ENCODE measurements at regions of chr19 and their contacts with region 1.

Region 1: DNA sequence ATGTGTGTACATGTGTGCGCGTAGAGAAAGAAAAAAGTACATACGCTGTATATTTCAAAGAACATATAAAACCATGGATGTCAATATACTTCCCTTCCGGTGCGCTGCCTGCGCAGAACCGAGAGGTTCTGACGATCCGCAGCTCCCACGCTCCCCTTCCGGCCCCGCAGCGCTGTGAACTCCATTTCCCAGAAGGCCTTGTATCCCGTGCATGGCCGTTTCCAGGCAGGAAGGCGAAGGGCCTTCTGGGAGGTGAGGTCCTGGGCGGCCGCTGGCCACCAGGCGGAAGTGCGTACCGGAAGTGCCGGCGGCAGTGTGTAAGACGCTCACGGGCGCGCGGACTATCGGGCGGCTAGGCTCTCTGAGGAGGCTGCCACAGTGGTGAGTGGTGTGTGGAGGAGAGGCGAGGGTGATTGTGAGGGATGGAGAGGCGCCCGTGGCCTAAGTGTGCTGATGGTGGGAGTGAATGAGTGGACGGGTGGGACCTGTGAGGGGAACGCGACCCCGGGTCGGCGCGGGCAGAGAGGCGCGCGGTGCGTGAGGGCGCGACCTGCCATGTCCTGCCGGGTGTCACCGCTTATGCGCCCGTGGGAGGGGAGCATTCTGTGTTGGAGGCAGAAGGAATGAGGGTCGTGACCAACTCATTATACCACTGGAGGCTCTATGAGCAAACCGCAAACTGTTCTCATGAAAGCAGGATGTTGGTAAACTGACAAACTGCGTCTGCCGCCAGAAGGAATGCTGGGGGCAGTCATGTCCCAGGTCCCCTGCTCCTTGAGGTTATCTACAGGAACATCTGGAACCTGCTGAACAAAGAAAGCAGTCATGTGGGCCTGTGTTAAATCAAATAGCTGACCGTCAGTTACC is at the start of gene ERVK3-1:
- DNase-seq: peak; percentile 80 to 95 (median 93)
- ATAC-seq: peak; percentile 99
- H3K4me3 ChIP-seq: peak within 1 kb of the TSS; percentile 69
- H3K4me3 Mint-ChIP-seq: peak within 1 kb of the TSS; percentile 94 to 100 (median 98)
- H3K27ac ChIP-seq: peak within 1 kb of the TSS; percentile 91
- H3K27ac Mint-ChIP-seq: peak within 1 kb of the TSS; percentile 98 to 100 (median 99)
- H3K4me1 ChIP-seq: peaks cover 14 to 20% of the 10 kb centered on the region in 2 donors
- H3K4me1 Mint-ChIP-seq: peaks cover 33 to 64% (median 55%) of the 10 kb centered on the region in 7 donors
- H3K27me3 ChIP-seq: no peaks in the 10 kb centered on the region
- H3K27me3 Mint-ChIP-seq: no peaks in the 10 kb centered on the region
- total RNA-seq, gene ERVK3-1: 59.7 to 122 (median 65.4) TPM

Region 2: GRCh38 chr19:57240311-57241090 is 1064.8 kb before region 1 on chr19 and contains the start of gene ZNF805:
- CTCF ChIA-PET with region 1: no interaction called
- POLR2A ChIA-PET with region 1: no interaction called
- intact Hi-C with region 1: loop called in 1 of 2 experiments (anchors 1 kb)
- DNase-seq: peak; percentile 82 to 96 (median 93)
- ATAC-seq: peak; percentile 97
- H3K4me3 ChIP-seq: peak within 1 kb of the TSS; percentile 73
- H3K4me3 Mint-ChIP-seq: peak within 1 kb of the TSS; percentile 88 to 97 (median 94)
- H3K27ac ChIP-seq: peak within 1 kb of the TSS; percentile 95
- H3K27ac Mint-ChIP-seq: peak within 1 kb of the TSS; percentile 96 to 99 (median 97)
- H3K4me1 ChIP-seq: peaks cover 19% of the 10 kb centered on the region in 2 donors
- H3K4me1 Mint-ChIP-seq: peaks cover 20 to 44% (median 36%) of the 10 kb centered on the region in 7 donors
- H3K27me3 ChIP-seq: no peaks in the 10 kb centered on the region
- H3K27me3 Mint-ChIP-seq: peaks cover 0 to 3% (median 0%) of the 10 kb centered on the region in 5 donors
- total RNA-seq, gene ZNF805: 12.0 to 26.2 (median 23.7) TPM

Region 3: DNA sequence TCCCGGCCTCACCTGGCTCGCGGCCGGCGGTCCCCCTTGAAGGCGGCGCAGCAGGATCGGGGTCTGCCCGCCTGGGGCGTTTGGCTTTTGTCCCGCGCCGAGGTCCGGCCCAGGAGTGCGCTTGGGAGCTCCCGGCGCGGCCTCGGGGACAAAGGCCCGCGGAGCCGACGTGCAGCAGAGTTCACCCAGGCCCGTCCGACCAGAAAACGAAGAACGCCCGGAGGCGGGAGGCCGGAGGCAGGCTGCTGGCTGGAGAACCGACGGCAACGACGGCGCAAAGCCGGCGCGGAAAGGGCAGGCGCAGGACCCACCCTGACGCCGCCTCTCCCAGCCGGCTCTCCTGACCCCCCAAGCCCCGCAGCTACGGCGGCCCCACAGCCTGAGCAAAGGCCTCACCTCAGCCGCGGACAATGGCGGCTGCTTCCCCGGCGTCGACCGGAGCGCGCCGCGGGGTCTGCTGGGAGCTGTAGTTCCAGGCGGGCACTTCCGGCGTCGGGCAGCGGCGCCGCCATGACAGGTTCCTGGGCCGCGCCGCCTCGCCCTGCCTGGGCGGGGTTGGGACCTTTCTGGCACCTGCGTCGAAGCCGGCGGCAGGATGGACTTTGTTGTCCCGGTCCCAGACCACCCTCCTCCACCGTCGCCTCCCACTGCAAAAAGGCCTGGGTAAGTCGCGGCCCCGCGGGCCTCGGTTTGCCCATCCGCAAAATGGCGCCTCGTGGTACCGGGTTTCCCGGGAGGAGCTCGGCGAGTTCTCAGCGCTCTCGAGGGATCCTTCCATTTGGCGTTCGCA is 302.7 kb before region 1 on chr19 and contains the start of gene ZNF606:
- CTCF ChIA-PET with region 1: no interaction called
- POLR2A ChIA-PET with region 1: no interaction called
- intact Hi-C with region 1: loop called in 1 of 2 experiments (anchors 1 kb)
- DNase-seq: peak; percentile 79 to 87 (median 85)
- ATAC-seq: peak; percentile 100
- H3K4me3 ChIP-seq: peak within 1 kb of the TSS; percentile 91
- H3K4me3 Mint-ChIP-seq: peak within 1 kb of the TSS; percentile 80 to 90 (median 88)
- H3K27ac ChIP-seq: peak within 1 kb of the TSS; percentile 90
- H3K27ac Mint-ChIP-seq: peak within 1 kb of the TSS; percentile 79 to 94 (median 88)
- H3K4me1 ChIP-seq: peaks cover 14 to 18% of the 10 kb centered on the region in 2 donors
- H3K4me1 Mint-ChIP-seq: peaks cover 15 to 40% (median 27%) of the 10 kb centered on the region in 7 donors
- H3K27me3 ChIP-seq: no peaks in the 10 kb centered on the region
- H3K27me3 Mint-ChIP-seq: no peaks in the 10 kb centered on the region
- total RNA-seq, gene ZNF606: 11.9 to 37.5 (median 15.3) TPM

Region 4: GRCh38 chr19:58346961-58347931 is 41.9 kb after region 1 on chr19:
- CTCF ChIA-PET with region 1: no interaction called
- POLR2A ChIA-PET with region 1: interaction called, 3 read pairs
- intact Hi-C with region 1: loop called in 1 of 2 experiments (anchors 5 kb)
- DNase-seq: peak; percentile 50 to 78 (median 68)
- ATAC-seq: peak; percentile 98
- H3K4me3 ChIP-seq: peak overlapping the region; percentile 77
- H3K4me3 Mint-ChIP-seq: peak overlapping the region; percentile 86 to 97 (median 92)
- H3K27ac ChIP-seq: peak overlapping the region; percentile 73
- H3K27ac Mint-ChIP-seq: peak overlapping the region; percentile 71 to 93 (median 85)
- H3K4me1 ChIP-seq: peaks cover 0 to 7% of the 10 kb centered on the region in 2 donors
- H3K4me1 Mint-ChIP-seq: peaks cover 23 to 36% (median 29%) of the 10 kb centered on the region in 7 donors
- H3K27me3 ChIP-seq: no peaks in the 10 kb centered on the region
- H3K27me3 Mint-ChIP-seq: peaks cover 0 to 5% (median 0%) of the 10 kb centered on the region in 5 donors

Region 5: DNA sequence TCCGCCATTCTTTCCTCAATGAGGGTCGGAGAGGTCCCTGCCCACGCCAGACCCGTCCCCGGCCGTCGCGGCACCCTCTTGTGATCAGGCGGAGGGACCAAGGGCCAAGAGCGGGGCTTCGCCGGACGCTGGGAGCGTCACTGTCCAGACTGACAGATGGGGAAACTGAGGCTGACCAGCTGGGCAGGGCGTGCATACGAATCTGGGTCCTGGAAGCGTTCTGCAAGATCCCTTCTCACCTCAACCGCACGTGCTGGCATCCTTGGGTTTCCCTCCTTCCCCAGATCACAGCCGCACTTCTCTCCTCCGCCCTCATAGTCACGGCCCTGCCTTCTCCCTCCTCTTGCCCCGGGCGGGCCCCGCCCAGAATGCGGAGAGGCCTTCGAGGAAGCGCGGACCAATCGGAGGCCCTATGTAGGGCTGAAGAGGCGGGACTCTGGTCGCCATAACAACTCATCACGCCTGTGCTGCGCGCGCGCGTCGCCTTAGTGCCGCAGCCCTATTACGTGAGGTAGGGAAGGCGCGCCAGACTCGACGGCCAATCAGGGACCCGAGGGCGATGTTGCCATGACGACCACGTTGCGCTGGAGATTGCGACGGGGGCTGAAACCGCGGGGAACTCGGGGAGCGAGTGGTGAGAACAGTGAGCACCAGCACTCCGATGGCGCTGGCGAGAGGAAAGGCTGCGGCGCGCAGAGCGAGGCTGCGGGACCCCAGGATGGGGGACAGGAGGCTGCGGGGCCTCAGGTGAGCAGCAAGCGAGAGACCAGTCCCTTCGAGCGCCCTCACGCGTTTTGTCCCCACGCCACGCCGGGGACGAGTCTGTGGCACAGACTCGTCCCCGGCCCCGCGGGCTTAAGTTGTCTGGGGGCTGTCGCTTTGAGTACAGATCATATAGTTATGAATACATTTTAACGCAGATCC is 95.9 kb after region 1 on chr19:
- CTCF ChIA-PET with region 1: no interaction called
- POLR2A ChIA-PET with region 1: no interaction called
- intact Hi-C with region 1: loop called in 1 of 2 experiments (anchors 1 kb)
- DNase-seq: peak; percentile 96 to 100 (median 98)
- ATAC-seq: peak; percentile 97
- H3K4me3 ChIP-seq: peak overlapping the region; percentile 77
- H3K4me3 Mint-ChIP-seq: peak overlapping the region; percentile 86 to 98 (median 94)
- H3K27ac ChIP-seq: peak overlapping the region; percentile 91
- H3K27ac Mint-ChIP-seq: peak overlapping the region; percentile 88 to 97 (median 94)
- H3K4me1 ChIP-seq: peaks cover 6 to 13% of the 10 kb centered on the region in 2 donors
- H3K4me1 Mint-ChIP-seq: peaks cover 6 to 19% (median 8%) of the 10 kb centered on the region in 7 donors
- H3K27me3 ChIP-seq: peaks cover 0 to 3% of the 10 kb centered on the region in 2 donors
- H3K27me3 Mint-ChIP-seq: peaks cover 5 to 20% (median 7%) of the 10 kb centered on the region in 5 donors

Region 6: GRCh38 chr19:58466760-58467589 is 161.7 kb after region 1 on chr19 and contains the start of gene ZNF324:
- CTCF ChIA-PET with region 1: no interaction called
- POLR2A ChIA-PET with region 1: no interaction called
- intact Hi-C with region 1: loop called (anchors 1 to 2 kb)
- DNase-seq: peak; percentile 92 to 97 (median 95)
- ATAC-seq: peak; percentile 98
- H3K4me3 ChIP-seq: peak within 1 kb of the TSS; percentile 92
- H3K4me3 Mint-ChIP-seq: peak within 1 kb of the TSS; percentile 80 to 89 (median 86)
- H3K27ac ChIP-seq: peak within 1 kb of the TSS; percentile 99
- H3K27ac Mint-ChIP-seq: peak within 1 kb of the TSS in 8 of 9 donors; percentile 67 to 91 (median 85)
- H3K4me1 ChIP-seq: peaks cover 7 to 11% of the 10 kb centered on the region in 2 donors
- H3K4me1 Mint-ChIP-seq: peaks cover 14 to 27% (median 22%) of the 10 kb centered on the region in 7 donors
- H3K27me3 ChIP-seq: no peaks in the 10 kb centered on the region
- H3K27me3 Mint-ChIP-seq: peaks cover 0 to 3% (median 0%) of the 10 kb centered on the region in 5 donors
- total RNA-seq, gene ZNF324: 14.2 to 28.0 (median 23.4) TPM

Measured in naive thymus-derived CD4-positive, alpha-beta T cell (primary cell).